Activated T-helper 2 cell treated with anti-CD3 and anti-CD28 coated beads, Interferon-gamma antibody, Interleukin-2, Interleukin-4, amounts not matched to agents 10 μg/mL and 5 μg/mL and 100 μg/mL, durations not matched to agents 14 hours and 24 hours and 36 hours (primary cell): ENCODE measurements at regions of chr18 and their contacts with region 1.

Region 1: DNA sequence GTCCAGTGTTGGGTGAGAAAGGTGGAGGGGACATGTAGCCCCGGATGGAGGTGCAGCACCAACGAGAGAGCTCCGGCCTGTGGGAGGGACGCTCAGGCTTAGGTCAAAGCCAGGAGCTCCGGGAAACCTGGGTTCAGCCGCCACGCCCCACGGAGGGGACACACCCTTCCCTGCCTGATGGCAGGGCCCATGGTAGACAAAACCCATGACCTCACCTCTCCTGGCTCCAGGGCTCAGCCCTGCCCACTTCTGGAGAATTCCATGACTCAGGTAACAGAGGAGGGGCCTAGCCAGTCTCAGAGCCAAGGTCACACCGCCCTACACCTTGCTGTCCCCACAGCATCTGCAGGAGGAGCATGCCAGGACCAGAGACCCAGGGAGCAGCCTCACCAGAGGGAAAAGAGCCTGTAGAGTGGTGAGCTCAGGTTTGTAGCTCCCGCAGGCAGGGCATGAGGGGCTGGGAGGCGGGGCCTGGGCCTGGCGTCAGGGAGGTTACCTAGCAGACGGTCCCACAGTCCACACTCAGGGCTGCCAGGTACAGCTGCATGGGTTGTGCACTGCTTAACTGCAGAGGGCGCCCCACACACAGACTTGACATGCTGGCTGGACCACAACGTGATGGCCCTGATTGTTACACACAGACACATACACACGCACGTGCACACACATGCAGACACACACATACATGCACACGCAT is 70.8 kb upstream of the SMAD7 start:
- DNase-seq: peak; percentile 38
- H3K4me3 Mint-ChIP-seq: no peak overlapping the region
- H3K27ac Mint-ChIP-seq: no peak overlapping the region
- H3K4me1 Mint-ChIP-seq: peaks cover 6% of the 10 kb centered on the region
- H3K27me3 Mint-ChIP-seq: no peaks in the 10 kb centered on the region

Region 2: DNA sequence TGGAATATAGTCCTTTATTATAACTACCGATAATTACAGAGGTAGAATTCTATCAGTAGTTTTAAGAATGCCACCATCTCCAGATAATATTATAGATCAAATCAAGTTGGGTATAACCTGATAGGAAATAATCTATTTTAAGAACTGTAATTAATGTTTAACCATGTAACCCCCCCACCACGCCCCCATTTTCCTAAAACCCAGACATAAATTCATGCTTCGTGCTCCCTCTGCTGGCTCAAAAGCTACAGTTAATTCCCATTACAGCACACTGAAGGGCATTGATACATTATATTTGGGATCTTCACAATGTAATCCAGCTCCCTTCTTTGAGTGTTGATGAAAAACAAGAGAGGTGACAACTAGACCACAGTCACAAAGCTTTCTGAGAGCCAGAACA is 157.2 kb after region 1 on chr18:
- intact Hi-C with region 1: loop called (anchors 2 kb)
- DNase-seq: no peak
- H3K4me3 Mint-ChIP-seq: no peak overlapping the region
- H3K27ac Mint-ChIP-seq: no peak overlapping the region
- H3K4me1 Mint-ChIP-seq: peaks cover 26% of the 10 kb centered on the region
- H3K27me3 Mint-ChIP-seq: peaks cover 12% of the 10 kb centered on the region

Region 3: GRCh38 chr18:49238433-49239042 is 217.0 kb after region 1 on chr18:
- intact Hi-C with region 1: loop called (anchors 2 kb)
- DNase-seq: no peak
- H3K4me3 Mint-ChIP-seq: no peak overlapping the region
- H3K27ac Mint-ChIP-seq: no peak overlapping the region
- H3K4me1 Mint-ChIP-seq: no peaks in the 10 kb centered on the region
- H3K27me3 Mint-ChIP-seq: no peaks in the 10 kb centered on the region

Region 4: GRCh38 chr18:49447810-49448745 is 426.5 kb after region 1 on chr18:
- intact Hi-C with region 1: loop called (anchors 5 kb)
- DNase-seq: no peak
- H3K4me3 Mint-ChIP-seq: no peak overlapping the region
- H3K27ac Mint-ChIP-seq: no peak overlapping the region
- H3K4me1 Mint-ChIP-seq: peaks cover 7% of the 10 kb centered on the region
- H3K27me3 Mint-ChIP-seq: no peaks in the 10 kb centered on the region